Colonic mucosa (tissue), 4 donors: ENCODE measurements at regions of chr2 and their contacts with region 1.

Region 1: GRCh38 chr2:219402665-219403515 is 15.2 kb upstream of the DNPEP start:
- DNase-seq: peak; percentile 65
- H3K4me3 ChIP-seq: no peak overlapping the region
- H3K27ac ChIP-seq: no peak overlapping the region
- H3K4me1 ChIP-seq: peaks cover 11% of the 10 kb centered on the region
- H3K27me3 ChIP-seq: no peaks in the 10 kb centered on the region
- CTCF ChIP-seq: peak; percentile 89

Region 2: GRCh38 chr2:219186754-219187456 is 216.0 kb before region 1 on chr2:
- intact Hi-C with region 1: no loop called
- DNase-seq: peak; percentile 7
- H3K4me3 ChIP-seq: no peak overlapping the region
- H3K27ac ChIP-seq: no peak overlapping the region
- H3K4me1 ChIP-seq: no peaks in the 10 kb centered on the region
- H3K27me3 ChIP-seq: no peaks in the 10 kb centered on the region
- CTCF ChIP-seq: no peak

Region 3: GRCh38 chr2:219475697-219476651 is 73.1 kb after region 1 on chr2:
- intact Hi-C with region 1: loop called (anchors 5 kb)
- DNase-seq: peak; percentile 77
- H3K4me3 ChIP-seq: no peak overlapping the region
- H3K27ac ChIP-seq: no peak overlapping the region
- H3K4me1 ChIP-seq: no peaks in the 10 kb centered on the region
- H3K27me3 ChIP-seq: no peaks in the 10 kb centered on the region
- CTCF ChIP-seq: peak; percentile 76